ENCODE measurements at regions of chr1 and their contacts with region 1.

Region 1: GRCh38 chr1:201481761-201482493 is 12.9 kb upstream of the PHLDA3 start:
- DNase-seq: peak; percentile 87
- H3K4me3 Mint-ChIP-seq: peak overlapping the region; percentile 35
- H3K27ac Mint-ChIP-seq: no peak overlapping the region
- H3K4me1 Mint-ChIP-seq: peaks cover 22% of the 10 kb centered on the region
- H3K27me3 Mint-ChIP-seq: peaks cover 10% of the 10 kb centered on the region

Region 2: GRCh38 chr1:201419746-201420607 is 62.0 kb before region 1 on chr1:
- CTCF ChIA-PET with region 1: no interaction called
- POLR2A ChIA-PET with region 1: no interaction called
- intact Hi-C with region 1: no loop called
- DNase-seq: no peak
- H3K4me3 Mint-ChIP-seq: no peak overlapping the region
- H3K27ac Mint-ChIP-seq: no peak overlapping the region
- H3K4me1 Mint-ChIP-seq: no peaks in the 10 kb centered on the region
- H3K27me3 Mint-ChIP-seq: peaks cover 3% of the 10 kb centered on the region

Region 3: GRCh38 chr1:201436393-201436792 is 45.5 kb before region 1 on chr1:
- CTCF ChIA-PET with region 1: interaction called, 50 read pairs
- POLR2A ChIA-PET with region 1: no interaction called
- intact Hi-C with region 1: loop called (anchors 2 kb)
- DNase-seq: no peak
- H3K4me3 Mint-ChIP-seq: no peak overlapping the region
- H3K27ac Mint-ChIP-seq: no peak overlapping the region
- H3K4me1 Mint-ChIP-seq: peaks cover 5% of the 10 kb centered on the region
- H3K27me3 Mint-ChIP-seq: peaks cover 18% of the 10 kb centered on the region

Region 4: DNA sequence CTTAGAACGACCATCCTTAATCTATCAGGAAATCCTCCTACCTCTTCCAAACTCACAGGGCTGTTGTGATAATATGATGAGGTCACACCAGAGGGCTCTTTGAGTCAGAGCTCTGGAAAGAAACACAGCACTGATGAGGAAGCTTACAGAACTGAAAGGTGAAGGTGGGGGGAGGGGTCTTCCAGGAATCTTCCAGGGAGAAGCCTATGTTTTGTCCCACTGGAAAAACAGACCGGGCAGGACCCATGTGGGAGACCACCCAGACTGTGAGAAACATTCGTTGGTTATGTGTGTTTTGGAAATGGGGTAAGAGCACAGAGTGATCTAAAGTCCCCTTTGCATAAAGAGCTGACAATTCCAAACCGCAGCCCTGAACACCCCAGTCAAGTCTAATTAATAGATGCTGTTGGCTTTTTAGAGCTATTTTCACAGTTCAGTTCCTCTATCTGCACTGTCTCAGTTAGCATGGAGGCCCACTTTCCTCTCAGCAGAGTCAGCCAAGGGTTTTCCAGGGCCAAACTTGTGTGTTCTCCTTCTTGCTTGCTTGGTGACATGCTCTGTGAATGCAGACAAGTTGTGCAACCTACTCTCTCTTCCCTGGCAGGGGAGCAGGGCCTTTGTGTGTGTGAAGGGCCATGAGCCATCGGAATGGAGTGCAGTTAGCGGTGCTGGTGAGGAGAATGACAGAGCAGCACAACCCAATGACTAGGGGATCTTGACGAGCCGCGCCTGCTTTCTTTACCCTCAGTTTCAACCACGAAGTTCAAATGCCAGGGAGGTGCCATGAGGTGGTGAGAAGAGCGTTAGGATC is 25.2 kb before region 1 on chr1:
- CTCF ChIA-PET with region 1: interaction called, 21 read pairs
- POLR2A ChIA-PET with region 1: no interaction called
- intact Hi-C with region 1: no loop called
- DNase-seq: no peak
- H3K4me3 Mint-ChIP-seq: no peak overlapping the region
- H3K27ac Mint-ChIP-seq: no peak overlapping the region
- H3K4me1 Mint-ChIP-seq: peaks cover 10% of the 10 kb centered on the region
- H3K27me3 Mint-ChIP-seq: peaks cover 8% of the 10 kb centered on the region

Region 5: DNA sequence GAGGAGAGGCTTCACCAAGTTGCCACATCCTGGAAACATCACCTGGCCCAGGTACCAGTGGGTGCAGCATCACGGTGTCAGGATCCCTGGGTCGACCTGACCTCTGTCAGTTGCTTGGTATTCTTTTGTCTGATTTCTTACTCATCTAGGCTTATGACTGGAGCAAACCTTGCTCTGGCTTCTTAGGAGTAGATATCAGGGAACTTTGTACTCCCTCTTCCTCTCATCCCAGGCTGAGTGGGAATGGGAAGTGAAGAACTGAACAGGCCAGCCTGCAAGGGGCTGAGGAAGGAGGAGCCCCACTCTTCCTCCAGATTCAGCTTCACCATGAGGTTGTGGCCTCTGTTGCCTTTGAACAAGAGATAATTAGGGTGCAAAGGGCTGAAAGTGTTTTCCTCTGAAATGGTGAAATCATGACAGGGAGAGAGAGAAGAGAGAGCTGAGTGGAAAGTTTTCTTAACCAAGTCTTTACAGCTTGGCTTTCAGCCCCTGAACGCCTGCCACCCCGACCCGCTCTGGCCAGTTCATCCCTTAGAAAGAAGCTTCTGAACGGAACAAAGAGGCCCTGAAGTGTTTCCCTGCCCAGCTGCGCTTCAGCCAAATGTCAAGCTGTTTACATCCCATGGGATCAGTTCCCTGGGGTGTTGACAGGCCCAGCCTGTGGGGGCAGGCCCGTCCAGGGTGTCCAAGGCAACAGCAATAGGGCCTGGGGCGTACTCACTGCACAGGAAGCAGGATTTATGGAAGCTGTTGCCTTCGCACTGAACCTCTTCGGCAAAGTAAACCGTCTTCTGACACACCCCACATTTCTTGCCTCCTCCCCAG is 13.8 kb after region 1 on chr1:
- CTCF ChIA-PET with region 1: interaction called, 26 read pairs
- POLR2A ChIA-PET with region 1: no interaction called
- intact Hi-C with region 1: no loop called
- DNase-seq: no peak
- H3K4me3 Mint-ChIP-seq: no peak overlapping the region
- H3K27ac Mint-ChIP-seq: no peak overlapping the region
- H3K4me1 Mint-ChIP-seq: no peaks in the 10 kb centered on the region
- H3K27me3 Mint-ChIP-seq: no peaks in the 10 kb centered on the region

Region 6: GRCh38 chr1:201709564-201710295 is 227.8 kb after region 1 on chr1:
- CTCF ChIA-PET with region 1: interaction called, 10 read pairs
- POLR2A ChIA-PET with region 1: no interaction called
- intact Hi-C with region 1: no loop called
- DNase-seq: peak; percentile 69
- H3K4me3 Mint-ChIP-seq: no peak overlapping the region
- H3K27ac Mint-ChIP-seq: no peak overlapping the region
- H3K4me1 Mint-ChIP-seq: no peaks in the 10 kb centered on the region
- H3K27me3 Mint-ChIP-seq: no peaks in the 10 kb centered on the region